ENCODE measurements at regions of chr11 and their contacts with region 1.

Region 1: DNA sequence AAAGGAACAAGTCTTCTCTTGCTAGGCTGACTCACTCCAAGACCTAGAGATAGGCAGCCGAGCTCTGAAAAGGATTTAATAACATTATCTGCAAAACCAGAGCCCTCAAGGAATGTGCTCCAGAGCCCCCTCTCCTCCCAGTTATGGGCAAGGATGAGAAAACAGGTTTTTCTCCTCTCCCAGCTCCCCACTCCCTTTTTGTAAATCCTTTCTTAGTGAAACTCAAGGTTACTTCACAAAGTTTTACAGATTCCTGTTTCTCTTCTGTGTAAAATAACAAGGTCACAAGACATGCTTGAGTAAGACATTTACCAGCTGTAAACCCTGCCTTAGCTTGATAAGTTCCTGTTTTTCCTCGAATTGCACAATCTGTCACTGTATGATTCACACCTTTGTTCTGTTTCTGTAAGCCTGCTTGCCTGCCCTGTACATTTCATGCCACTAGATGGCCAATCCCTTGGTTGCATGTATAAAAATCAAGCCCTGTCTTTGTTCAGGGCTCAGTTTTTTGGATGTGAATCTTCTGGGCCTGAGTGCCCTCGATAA is 489.4 kb downstream of the KCNA4 start:
- DNase-seq: peak; percentile 93
- H3K4me3 Mint-ChIP-seq: peak overlapping the region; percentile 66
- H3K27ac Mint-ChIP-seq: peak overlapping the region; percentile 99
- H3K4me1 Mint-ChIP-seq: peaks cover 9% of the 10 kb centered on the region
- H3K27me3 Mint-ChIP-seq: no peaks in the 10 kb centered on the region
- CTCF ChIP-seq: peak; percentile 38

Region 2: DNA sequence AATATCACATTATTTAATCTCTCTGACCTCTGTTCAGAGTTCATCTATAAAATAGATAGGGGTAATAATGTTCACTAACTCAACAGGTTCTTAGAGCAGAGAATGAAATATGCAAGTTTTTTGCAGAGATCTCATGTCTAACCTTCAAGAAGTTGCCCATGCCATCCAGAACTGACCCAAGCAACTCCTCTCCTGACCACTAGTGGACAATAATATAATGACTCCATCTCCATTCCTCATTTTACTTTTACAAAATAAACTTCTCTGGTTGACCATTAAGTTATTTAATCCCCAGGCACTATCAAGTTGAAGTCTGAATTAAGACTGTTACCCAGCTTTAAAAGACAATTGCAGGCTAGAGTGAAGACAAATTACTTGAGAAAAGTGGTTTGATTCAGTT is 106.8 kb after region 1 on chr11:
- CTCF ChIA-PET with region 1: interaction called, 6 read pairs
- POLR2A ChIA-PET with region 1: no interaction called
- intact Hi-C with region 1: loop called (anchors 1 kb)
- DNase-seq: peak; percentile 30
- H3K4me3 Mint-ChIP-seq: no peak overlapping the region
- H3K27ac Mint-ChIP-seq: no peak overlapping the region
- H3K4me1 Mint-ChIP-seq: peaks cover 4% of the 10 kb centered on the region
- H3K27me3 Mint-ChIP-seq: no peaks in the 10 kb centered on the region
- CTCF ChIP-seq: peak; percentile 28

Region 3: GRCh38 chr11:30107899-30108298 is 580.4 kb after region 1 on chr11:
- CTCF ChIA-PET with region 1: interaction called, 3 read pairs
- POLR2A ChIA-PET with region 1: no interaction called
- intact Hi-C with region 1: loop called (anchors 10 kb)
- DNase-seq: peak; percentile 86
- H3K4me3 Mint-ChIP-seq: no peak overlapping the region
- H3K27ac Mint-ChIP-seq: peak overlapping the region; percentile 42
- H3K4me1 Mint-ChIP-seq: peaks cover 19% of the 10 kb centered on the region
- H3K27me3 Mint-ChIP-seq: no peaks in the 10 kb centered on the region
- CTCF ChIP-seq: no peak